Activated CD4-positive, alpha-beta memory T cell treated with anti-CD3 and anti-CD28 coated beads for 36 hours (primary cell): ENCODE measurements at regions of chr16 and their contacts with region 1.

Region 1: DNA sequence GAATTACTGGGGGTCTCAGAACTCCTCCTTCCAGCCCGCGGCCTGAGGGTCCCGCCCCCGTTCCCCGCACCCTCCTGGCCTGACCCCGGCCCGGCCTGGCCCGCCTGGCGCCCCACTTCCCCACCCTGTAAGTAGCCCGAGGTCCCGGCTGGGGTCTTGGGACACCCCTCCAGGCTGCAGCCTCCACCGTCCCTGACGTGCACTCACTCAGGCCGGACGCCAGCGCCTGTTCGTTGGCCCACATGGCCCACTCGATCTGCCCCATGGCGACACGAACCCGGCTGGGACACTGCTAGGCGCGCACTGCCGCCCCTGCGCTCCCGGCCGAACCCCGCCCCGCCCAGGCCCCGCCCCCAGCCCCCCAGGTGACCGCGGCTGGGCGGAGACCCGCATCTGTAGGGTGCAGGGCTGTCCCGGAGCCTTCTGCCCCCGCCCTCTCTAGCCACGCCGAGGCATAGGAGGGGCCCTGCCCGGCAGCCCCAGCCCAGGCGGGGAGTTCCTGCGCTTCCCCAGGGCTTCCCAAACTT is at the start of gene CYBA:
- DNase-seq: peak; percentile 93
- H3K4me3 Mint-ChIP-seq: peak within 1 kb of the TSS; percentile 86
- H3K27ac Mint-ChIP-seq: peak within 1 kb of the TSS; percentile 97
- H3K4me1 Mint-ChIP-seq: peaks cover 14% of the 10 kb centered on the region
- H3K27me3 Mint-ChIP-seq: no peaks in the 10 kb centered on the region
- total RNA-seq, gene CYBA: 262 to 265 TPM

Region 2: DNA sequence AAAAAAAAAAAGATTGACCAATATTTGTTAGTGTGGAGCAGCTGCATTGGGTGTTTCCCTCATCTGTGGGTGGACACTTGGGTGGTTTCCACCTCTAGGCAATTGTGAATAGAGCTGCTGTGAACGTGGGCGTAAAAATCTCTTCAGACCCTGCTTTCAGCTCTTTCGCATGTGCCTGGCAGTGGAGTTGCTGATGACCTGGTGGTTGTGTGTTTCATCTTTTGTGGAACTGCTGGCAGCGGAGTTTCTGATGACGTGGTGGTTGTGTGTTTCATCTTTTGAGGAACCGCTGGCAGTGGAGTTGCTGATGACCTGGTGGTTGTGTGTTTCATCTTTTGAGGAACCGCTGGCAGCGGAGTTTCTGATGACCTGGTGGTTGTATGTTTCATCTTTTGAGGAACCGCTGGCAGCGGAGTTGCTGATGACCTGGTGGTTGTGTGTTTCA is 59.2 kb before region 1 on chr16:
- CTCF ChIA-PET with region 1: no interaction called
- POLR2A ChIA-PET with region 1: interaction called, 5 read pairs
- intact Hi-C with region 1: loop called (anchors 1 kb)
- DNase-seq: peak; percentile 82
- H3K4me3 Mint-ChIP-seq: no peak overlapping the region
- H3K27ac Mint-ChIP-seq: peak overlapping the region; percentile 79
- H3K4me1 Mint-ChIP-seq: peaks cover 49% of the 10 kb centered on the region
- H3K27me3 Mint-ChIP-seq: no peaks in the 10 kb centered on the region

Region 3: GRCh38 chr16:88633684-88634140 is 17.1 kb before region 1 on chr16:
- CTCF ChIA-PET with region 1: no interaction called
- POLR2A ChIA-PET with region 1: interaction called, 7 read pairs
- intact Hi-C with region 1: loop called (anchors 2 kb)
- DNase-seq: peak; percentile 78
- H3K4me3 Mint-ChIP-seq: peak overlapping the region; percentile 66
- H3K27ac Mint-ChIP-seq: peak overlapping the region; percentile 54
- H3K4me1 Mint-ChIP-seq: peaks cover 46% of the 10 kb centered on the region
- H3K27me3 Mint-ChIP-seq: peaks cover 17% of the 10 kb centered on the region

Region 4: GRCh38 chr16:88662843-88663606 is 12.2 kb after region 1 on chr16 and contains the start of gene MVD:
- CTCF ChIA-PET with region 1: no interaction called
- POLR2A ChIA-PET with region 1: no interaction called
- intact Hi-C with region 1: loop called (anchors 1 kb)
- DNase-seq: peak; percentile 98
- H3K4me3 Mint-ChIP-seq: peak within 1 kb of the TSS; percentile 91
- H3K27ac Mint-ChIP-seq: peak within 1 kb of the TSS; percentile 86
- H3K4me1 Mint-ChIP-seq: peaks cover 17% of the 10 kb centered on the region
- H3K27me3 Mint-ChIP-seq: no peaks in the 10 kb centered on the region
- total RNA-seq, gene MVD: 111 to 113 TPM

Region 5: DNA sequence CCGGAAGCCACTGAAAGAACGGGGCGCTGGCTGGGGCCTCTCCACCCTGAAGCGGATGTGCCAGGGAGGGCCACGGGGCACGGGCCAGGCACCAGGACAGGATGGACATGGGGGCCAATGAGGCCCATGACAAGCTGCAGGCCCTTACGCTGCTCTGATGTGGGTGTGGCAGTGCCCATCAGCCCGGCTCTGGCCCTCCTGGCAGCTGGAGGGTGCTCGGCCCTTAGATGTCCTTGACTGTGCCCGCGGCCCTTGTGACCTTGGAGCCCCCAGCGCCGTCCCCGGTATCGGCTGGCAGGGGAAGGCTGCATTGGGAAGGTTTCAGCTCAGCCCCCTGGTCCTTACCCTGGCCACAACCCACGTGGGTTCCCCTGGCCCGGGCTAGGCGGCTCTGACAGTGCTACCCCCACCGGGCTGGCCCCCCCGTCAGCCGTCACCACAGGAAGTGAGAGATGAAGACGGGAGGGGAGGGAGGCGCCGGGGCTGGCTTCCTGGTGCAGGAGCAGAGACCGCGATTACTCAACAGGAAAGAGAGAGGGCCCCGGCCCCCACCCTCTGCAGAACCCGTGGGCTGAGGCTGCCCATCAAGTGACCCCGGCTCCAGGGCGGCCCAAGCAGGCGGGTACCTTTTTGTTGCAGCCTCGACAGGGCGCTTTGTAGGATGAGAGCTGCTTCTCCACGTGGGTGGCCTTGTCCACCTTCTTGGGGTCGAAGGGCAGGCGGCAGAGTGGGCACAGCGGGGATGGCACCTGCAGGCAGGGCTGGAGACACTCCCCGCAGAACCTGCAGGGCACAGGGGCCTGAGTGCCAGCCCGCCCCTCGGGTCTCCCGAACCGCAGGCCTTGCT is 50.0 kb after region 1 on chr16:
- CTCF ChIA-PET with region 1: interaction called, 4 read pairs
- POLR2A ChIA-PET with region 1: interaction called, 3 read pairs
- intact Hi-C with region 1: loop called (anchors 1 kb)
- DNase-seq: peak; percentile 98
- H3K4me3 Mint-ChIP-seq: peak overlapping the region; percentile 81
- H3K27ac Mint-ChIP-seq: peak overlapping the region; percentile 91
- H3K4me1 Mint-ChIP-seq: peaks cover 64% of the 10 kb centered on the region
- H3K27me3 Mint-ChIP-seq: no peaks in the 10 kb centered on the region